Naive thymus-derived CD4-positive, alpha-beta T cell (primary cell): ENCODE measurements at regions of chr4 and their contacts with region 1.

Region 1: DNA sequence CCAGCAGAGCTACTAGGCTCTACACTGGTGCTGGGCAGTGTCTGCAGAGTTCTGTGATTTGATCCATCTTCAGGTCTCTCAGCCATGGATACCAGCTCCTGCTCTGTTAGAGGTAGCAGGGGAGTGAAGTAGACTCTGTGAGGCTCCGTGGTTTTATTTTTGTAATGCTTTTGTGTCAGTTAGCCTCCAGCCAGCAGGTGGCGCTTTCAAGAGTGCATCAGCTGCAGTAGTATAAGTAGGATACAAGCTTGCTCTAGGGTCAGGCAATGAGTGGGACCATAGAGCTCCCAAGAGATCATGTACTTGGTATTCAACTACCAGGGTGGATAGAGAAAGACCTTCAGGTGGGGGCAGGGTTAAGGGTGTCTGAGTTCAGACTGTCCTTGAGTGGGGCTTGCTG is 362.5 kb upstream of the TRAM1L1 start:
- DNase-seq: no peak
- ATAC-seq: no peak
- H3K4me3 ChIP-seq: no peak overlapping the region
- H3K4me3 Mint-ChIP-seq: no peak overlapping the region
- H3K27ac ChIP-seq: no peak overlapping the region
- H3K27ac Mint-ChIP-seq: no peak overlapping the region
- H3K4me1 ChIP-seq: no peaks in the 10 kb centered on the region
- H3K4me1 Mint-ChIP-seq: no peaks in the 10 kb centered on the region
- H3K27me3 ChIP-seq: no peaks in the 10 kb centered on the region
- H3K27me3 Mint-ChIP-seq: no peaks in the 10 kb centered on the region

Region 2: GRCh38 chr4:117385526-117385925 is 62.4 kb before region 1 on chr4:
- CTCF ChIA-PET with region 1: no interaction called
- POLR2A ChIA-PET with region 1: no interaction called
- intact Hi-C with region 1: no loop called
- DNase-seq: no peak
- ATAC-seq: no peak
- H3K4me3 ChIP-seq: no peak overlapping the region
- H3K4me3 Mint-ChIP-seq: no peak overlapping the region
- H3K27ac ChIP-seq: no peak overlapping the region
- H3K27ac Mint-ChIP-seq: no peak overlapping the region
- H3K4me1 ChIP-seq: no peaks in the 10 kb centered on the region
- H3K4me1 Mint-ChIP-seq: peaks cover 0 to 1% (median 0%) of the 10 kb centered on the region in 7 donors
- H3K27me3 ChIP-seq: no peaks in the 10 kb centered on the region
- H3K27me3 Mint-ChIP-seq: no peaks in the 10 kb centered on the region

Region 3: DNA sequence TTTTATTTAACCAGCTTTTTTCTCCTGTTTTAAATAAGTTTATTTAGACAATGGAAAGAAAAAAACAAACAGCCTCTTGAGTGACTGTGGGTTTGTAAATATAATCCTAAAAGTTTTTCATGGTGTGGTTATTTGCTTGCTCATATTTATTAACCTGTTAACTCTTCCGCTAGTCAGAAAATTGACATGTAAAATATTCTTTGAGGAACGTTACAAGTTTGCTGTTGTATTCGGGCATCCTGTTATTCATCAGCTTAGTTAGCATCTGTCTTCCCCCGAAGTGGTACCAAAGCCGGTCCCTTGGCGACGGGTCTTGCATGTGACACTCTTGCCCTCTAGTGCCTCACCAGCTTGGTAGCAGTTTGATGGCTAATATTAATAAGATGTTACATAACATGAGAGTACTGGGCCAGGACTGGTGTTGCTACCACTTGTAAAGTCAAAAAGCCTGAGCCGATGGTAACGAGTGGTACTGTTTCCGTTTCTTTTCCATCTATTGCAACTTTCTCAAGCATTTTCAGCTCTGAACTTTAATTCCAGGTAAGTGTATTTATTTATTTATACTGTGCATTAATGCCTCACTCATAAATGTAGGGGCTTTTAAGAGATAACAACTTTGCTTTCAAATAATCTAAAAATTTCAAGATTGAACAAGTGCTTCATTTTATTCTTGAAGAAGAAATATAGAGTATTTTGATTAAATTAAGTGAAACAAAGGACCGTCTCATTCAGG is 586.3 kb after region 1 on chr4 and contains the start of gene NDST3:
- CTCF ChIA-PET with region 1: no interaction called
- POLR2A ChIA-PET with region 1: no interaction called
- intact Hi-C with region 1: loop called in 1 of 2 experiments (anchors 2 kb)
- DNase-seq: peak in 5 of 9 donors; percentile 1 to 37 (median 11)
- ATAC-seq: peak; percentile 60
- H3K4me3 ChIP-seq: no peak within 1 kb of the TSS
- H3K4me3 Mint-ChIP-seq: peak within 1 kb of the TSS in 9 of 10 donors; percentile 47 to 78 (median 68)
- H3K27ac ChIP-seq: no peak within 1 kb of the TSS
- H3K27ac Mint-ChIP-seq: peak within 1 kb of the TSS in 1 of 9 donors; percentile 33
- H3K4me1 ChIP-seq: no peaks in the 10 kb centered on the region
- H3K4me1 Mint-ChIP-seq: peaks cover 0 to 14% (median 12%) of the 10 kb centered on the region in 7 donors
- H3K27me3 ChIP-seq: no peaks in the 10 kb centered on the region
- H3K27me3 Mint-ChIP-seq: peaks cover 34 to 57% (median 39%) of the 10 kb centered on the region in 5 donors
- total RNA-seq, gene NDST3: 0.17 TPM in 1 of 5 experiments, not detected in the others